Esophagus muscularis mucosa (tissue), 4 donors: ENCODE measurements at regions of chr19 and their contacts with region 1.

Region 1: DNA sequence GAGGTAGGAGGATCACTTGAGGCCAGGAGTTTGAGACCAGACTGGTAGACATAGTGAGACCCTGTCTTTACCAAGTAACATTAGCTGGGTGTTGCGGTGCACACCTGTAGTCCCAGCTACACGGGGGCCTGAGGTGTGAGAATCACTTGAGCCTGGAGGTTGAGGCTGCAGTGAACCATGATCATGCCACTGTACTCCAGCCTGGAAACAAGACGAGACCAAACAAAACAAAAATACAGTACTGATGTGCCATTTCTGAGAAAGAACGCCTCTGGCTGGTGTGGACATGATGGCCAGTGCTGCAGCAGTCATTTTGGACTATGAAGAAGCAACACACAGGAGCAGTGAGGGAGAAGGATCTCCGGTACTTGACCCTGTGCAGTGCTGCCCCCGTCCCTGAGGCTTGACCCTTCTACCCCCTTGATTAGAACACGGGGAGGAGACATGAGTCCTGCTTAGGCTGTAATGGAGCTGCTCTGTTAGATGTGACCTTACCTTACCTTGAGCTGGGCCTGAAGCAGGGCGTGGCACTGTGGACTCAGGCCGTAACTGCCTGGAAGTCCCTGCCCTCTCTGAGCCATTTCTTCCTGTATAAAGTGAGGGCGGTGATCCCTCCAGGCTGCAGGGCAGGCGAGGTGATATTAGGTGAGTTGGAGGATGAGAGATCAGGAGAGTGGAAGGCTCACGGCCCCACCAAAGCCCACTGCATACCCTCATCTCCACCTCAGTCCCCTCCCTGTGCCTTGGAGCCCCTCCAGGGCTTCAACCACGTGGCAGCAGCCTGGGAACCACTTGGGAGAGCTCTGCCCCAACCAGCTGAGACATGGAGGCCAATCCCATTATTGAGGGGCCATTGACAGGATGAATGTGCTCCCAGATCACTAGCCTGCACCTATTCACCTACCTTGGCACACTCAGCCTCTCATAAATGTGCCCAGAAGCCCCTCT is 5.9 kb downstream of the RPL18A start:
- DNase-seq: no peak
- H3K4me3 ChIP-seq: no peak overlapping the region
- H3K27ac ChIP-seq: no peak overlapping the region
- H3K4me1 ChIP-seq: peaks cover 13 to 29% (median 17%) of the 10 kb centered on the region in 4 donors
- H3K27me3 ChIP-seq: peaks cover 0 to 13% (median 4%) of the 10 kb centered on the region in 4 donors
- CTCF ChIP-seq: no peak
- EP300 ChIP-seq: no peak
- POLR2A ChIP-seq: no peak

Region 2: GRCh38 chr19:17632577-17632976 is 233.1 kb before region 1 on chr19:
- intact Hi-C with region 1: no loop called
- DNase-seq: no peak
- H3K4me3 ChIP-seq: no peak overlapping the region
- H3K27ac ChIP-seq: no peak overlapping the region
- H3K4me1 ChIP-seq: no peaks in the 10 kb centered on the region
- H3K27me3 ChIP-seq: peaks cover 0 to 6% (median 0%) of the 10 kb centered on the region in 4 donors
- CTCF ChIP-seq: no peak
- EP300 ChIP-seq: no peak
- POLR2A ChIP-seq: no peak

Region 3: DNA sequence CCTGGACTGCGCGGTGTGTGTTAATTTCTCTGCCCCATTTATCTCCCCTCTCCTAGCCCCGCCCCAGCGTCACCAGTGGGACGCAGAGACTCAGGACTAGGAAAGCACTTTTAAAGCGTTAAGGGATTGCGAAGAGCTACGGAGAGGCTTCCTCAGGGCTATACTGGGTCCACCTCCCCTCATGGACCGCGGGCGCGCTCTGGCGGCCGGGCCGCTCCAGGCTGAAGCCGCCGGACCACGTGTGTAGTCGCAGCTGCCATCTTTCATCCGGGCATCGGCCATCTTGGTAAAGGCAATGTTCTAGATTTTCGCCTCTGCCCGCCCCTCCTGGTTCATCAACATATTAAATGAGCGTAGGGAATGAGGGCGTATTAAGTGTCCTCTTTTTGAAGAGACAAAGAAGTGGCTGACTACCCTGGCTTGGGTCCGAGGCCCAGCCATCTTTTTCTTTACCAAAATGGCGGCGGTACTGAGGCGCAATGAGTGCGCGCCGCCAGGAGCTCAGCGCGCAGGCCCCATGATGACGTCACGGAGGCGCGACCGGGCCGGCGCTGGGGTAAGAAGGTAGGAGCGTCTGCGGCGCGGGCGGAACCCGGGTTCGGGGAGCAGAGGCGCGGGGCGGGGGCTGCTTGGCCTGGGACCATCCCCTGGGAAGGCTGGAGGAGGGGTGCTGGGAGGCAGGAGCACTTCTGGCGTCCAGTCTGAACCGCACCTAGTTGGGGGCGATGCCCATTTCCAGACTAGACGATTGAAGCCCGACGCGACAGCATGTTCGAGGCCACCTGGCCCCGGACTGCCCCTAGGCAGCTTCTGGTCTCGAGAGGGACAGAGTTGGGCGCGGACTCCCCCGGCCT is 67.1 kb after region 1 on chr19 and contains the start of gene CCDC124:
- intact Hi-C with region 1: loop called (anchors 2 kb)
- DNase-seq: peak; percentile 97
- H3K4me3 ChIP-seq: peak within 1 kb of the TSS; percentile 85 to 96 (median 89)
- H3K27ac ChIP-seq: peak within 1 kb of the TSS; percentile 83 to 88 (median 87)
- H3K4me1 ChIP-seq: peaks cover 19 to 26% (median 25%) of the 10 kb centered on the region in 4 donors
- H3K27me3 ChIP-seq: peaks cover 0 to 6% (median 0%) of the 10 kb centered on the region in 4 donors
- CTCF ChIP-seq: peak; percentile 70 to 89 (median 73)
- EP300 ChIP-seq: no peak
- POLR2A ChIP-seq: peak; percentile 84
- total RNA-seq, gene CCDC124: 51.2 to 97.4 (median 74.3) TPM